Activated T-helper 1 cell treated with anti-CD3 and anti-CD28 coated beads, Interleukin-12 subunit alpha, Interleukin-12 subunit beta, Interleukin-2, Interleukin-4 antibody, amounts not matched to agents 30 ng/mL and 10 ng/mL and 1 ng/mL, durations not matched to agents 14 hours and 24 hours and 36 hours (primary cell): ENCODE measurements at regions of chrX and their contacts with region 1.

Region 1: GRCh38 chrX:1391707-1392375 is at the start of gene SLC25A6:
- DNase-seq: peak; percentile 100
- H3K4me3 Mint-ChIP-seq: peak within 1 kb of the TSS; percentile 93
- H3K27ac Mint-ChIP-seq: peak within 1 kb of the TSS; percentile 95
- H3K4me1 Mint-ChIP-seq: peaks cover 45% of the 10 kb centered on the region
- H3K27me3 Mint-ChIP-seq: no peaks in the 10 kb centered on the region
- total RNA-seq, gene SLC25A6: 281 and 289 TPM in 2 replicates

Region 2: GRCh38 chrX:318739-319578 is 1072.9 kb before region 1 on chrX and contains the start of gene GTPBP6:
- intact Hi-C with region 1: loop called (anchors 1 kb)
- DNase-seq: peak; percentile 100
- H3K4me3 Mint-ChIP-seq: peak within 1 kb of the TSS; percentile 86
- H3K27ac Mint-ChIP-seq: peak within 1 kb of the TSS; percentile 94
- H3K4me1 Mint-ChIP-seq: peaks cover 18% of the 10 kb centered on the region
- H3K27me3 Mint-ChIP-seq: peaks cover 2% of the 10 kb centered on the region
- total RNA-seq, gene GTPBP6: 68.3 and 69.5 TPM in 2 replicates

Region 3: DNA sequence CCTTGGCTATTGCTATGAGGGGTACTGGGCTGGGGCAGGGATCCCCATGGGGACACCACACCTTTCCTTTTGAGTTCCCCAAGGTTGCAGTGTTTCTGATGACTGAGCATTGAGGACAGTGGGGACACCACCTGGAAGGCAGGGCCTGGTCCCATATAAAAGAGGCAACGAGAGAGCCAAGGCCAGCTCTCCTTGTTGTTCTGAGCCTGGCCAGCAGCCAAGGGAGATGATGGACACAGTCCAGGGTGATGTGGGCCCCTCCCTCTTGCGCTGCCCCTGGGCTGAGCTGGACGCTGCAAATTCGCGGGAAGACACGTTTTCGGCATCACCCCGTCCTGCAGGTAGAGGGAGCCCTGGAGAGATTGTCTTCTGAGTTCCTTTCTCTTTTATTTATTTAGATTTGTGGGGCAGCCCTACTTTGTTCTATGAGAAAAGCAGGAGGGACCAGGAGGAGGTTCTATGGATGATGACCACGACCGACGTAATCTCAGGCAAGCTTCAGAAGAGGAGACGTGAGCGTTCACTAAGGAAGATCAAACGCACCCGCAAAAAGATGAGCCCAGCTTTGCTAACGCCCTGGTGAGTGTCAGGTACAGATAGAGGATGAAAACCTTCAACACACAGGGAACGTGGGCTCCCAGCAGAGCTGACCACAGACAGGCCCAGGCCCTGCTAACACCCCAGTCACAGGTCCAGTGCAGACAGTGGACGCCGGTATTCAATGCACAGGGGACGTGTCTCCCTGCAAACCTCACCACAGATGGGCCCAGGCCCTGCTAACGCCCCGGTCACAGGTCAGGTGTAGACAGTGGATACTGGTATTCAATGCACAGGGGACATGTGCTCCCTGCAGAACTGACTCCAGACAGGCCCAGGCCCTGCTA is 663.9 kb before region 1 on chrX:
- intact Hi-C with region 1: no loop called
- DNase-seq: no peak
- H3K4me3 Mint-ChIP-seq: no peak overlapping the region
- H3K27ac Mint-ChIP-seq: no peak overlapping the region
- H3K4me1 Mint-ChIP-seq: no peaks in the 10 kb centered on the region
- H3K27me3 Mint-ChIP-seq: no peaks in the 10 kb centered on the region

Region 4: GRCh38 chrX:1205680-1206611 is 185.9 kb before region 1 on chrX:
- intact Hi-C with region 1: loop called (anchors 1 kb)
- DNase-seq: peak; percentile 32
- H3K4me3 Mint-ChIP-seq: peak overlapping the region; percentile 57
- H3K27ac Mint-ChIP-seq: no peak overlapping the region
- H3K4me1 Mint-ChIP-seq: peaks cover 31% of the 10 kb centered on the region
- H3K27me3 Mint-ChIP-seq: peaks cover 1% of the 10 kb centered on the region

Region 5: DNA sequence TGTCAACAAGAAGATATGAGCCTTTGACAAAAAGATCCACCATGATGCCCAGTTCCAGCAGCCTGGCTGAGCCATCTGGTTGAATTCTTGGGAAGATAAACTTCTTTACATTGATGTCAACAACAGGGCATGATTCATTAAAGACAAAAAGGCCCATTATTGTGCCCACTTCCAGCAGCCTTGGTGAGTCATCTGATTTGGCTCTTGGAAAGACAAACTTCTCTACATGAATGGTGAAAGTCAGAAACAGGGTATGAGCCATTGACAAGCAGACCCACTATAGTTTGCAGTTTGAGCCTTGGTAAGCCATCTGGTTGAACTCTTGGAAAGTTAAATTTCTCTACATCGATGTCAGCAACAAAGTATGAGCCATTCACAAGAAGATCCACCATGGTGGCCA is 127.3 kb before region 1 on chrX:
- intact Hi-C with region 1: no loop called
- DNase-seq: no peak
- H3K4me3 Mint-ChIP-seq: no peak overlapping the region
- H3K27ac Mint-ChIP-seq: no peak overlapping the region
- H3K4me1 Mint-ChIP-seq: peaks cover 9% of the 10 kb centered on the region
- H3K27me3 Mint-ChIP-seq: peaks cover 2% of the 10 kb centered on the region

Region 6: DNA sequence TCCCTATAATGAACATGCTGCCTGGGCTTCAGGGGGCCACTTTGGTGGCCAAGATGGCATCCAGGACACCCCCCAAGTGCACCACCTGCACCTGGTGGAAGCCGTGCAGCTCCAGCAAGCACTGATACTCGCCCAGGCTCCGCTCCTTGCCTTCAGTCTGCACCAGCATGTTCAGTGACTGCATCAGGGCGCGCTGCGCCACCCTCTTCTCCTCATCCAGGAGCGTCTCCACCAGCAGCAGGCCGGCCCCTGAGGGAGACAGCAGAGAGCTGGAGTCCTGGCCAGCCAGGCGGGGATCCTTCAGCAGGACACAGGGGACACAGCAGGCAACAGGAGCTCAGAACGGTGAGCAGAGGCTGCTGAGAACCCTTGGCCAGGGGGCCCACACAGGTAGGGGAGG is 11.4 kb after region 1 on chrX:
- intact Hi-C with region 1: no loop called
- DNase-seq: no peak
- H3K4me3 Mint-ChIP-seq: no peak overlapping the region
- H3K27ac Mint-ChIP-seq: no peak overlapping the region
- H3K4me1 Mint-ChIP-seq: no peaks in the 10 kb centered on the region
- H3K27me3 Mint-ChIP-seq: no peaks in the 10 kb centered on the region

Region 7: GRCh38 chrX:1462596-1463251 is 70.9 kb after region 1 on chrX:
- intact Hi-C with region 1: loop called (anchors 2 kb)
- DNase-seq: peak; percentile 79
- H3K4me3 Mint-ChIP-seq: peak overlapping the region; percentile 77
- H3K27ac Mint-ChIP-seq: peak overlapping the region; percentile 90
- H3K4me1 Mint-ChIP-seq: peaks cover 58% of the 10 kb centered on the region
- H3K27me3 Mint-ChIP-seq: no peaks in the 10 kb centered on the region

Region 8: GRCh38 chrX:1591102-1591900 is 199.5 kb after region 1 on chrX and contains the start of gene AKAP17A:
- intact Hi-C with region 1: loop called (anchors 2 kb)
- DNase-seq: peak; percentile 99
- H3K4me3 Mint-ChIP-seq: peak within 1 kb of the TSS; percentile 95
- H3K27ac Mint-ChIP-seq: peak within 1 kb of the TSS; percentile 93
- H3K4me1 Mint-ChIP-seq: peaks cover 10% of the 10 kb centered on the region
- H3K27me3 Mint-ChIP-seq: no peaks in the 10 kb centered on the region
- total RNA-seq, gene AKAP17A: 63.9 and 66.1 TPM in 2 replicates

Region 9: GRCh38 chrX:2608638-2609430 is 1217.0 kb after region 1 on chrX:
- intact Hi-C with region 1: loop called (anchors 2 kb)
- DNase-seq: peak; percentile 89
- H3K4me3 Mint-ChIP-seq: peak overlapping the region; percentile 91
- H3K27ac Mint-ChIP-seq: peak overlapping the region; percentile 89
- H3K4me1 Mint-ChIP-seq: peaks cover 47% of the 10 kb centered on the region
- H3K27me3 Mint-ChIP-seq: no peaks in the 10 kb centered on the region